ENCODE measurements at regions of chr5 and their contacts with region 1.

Region 1: DNA sequence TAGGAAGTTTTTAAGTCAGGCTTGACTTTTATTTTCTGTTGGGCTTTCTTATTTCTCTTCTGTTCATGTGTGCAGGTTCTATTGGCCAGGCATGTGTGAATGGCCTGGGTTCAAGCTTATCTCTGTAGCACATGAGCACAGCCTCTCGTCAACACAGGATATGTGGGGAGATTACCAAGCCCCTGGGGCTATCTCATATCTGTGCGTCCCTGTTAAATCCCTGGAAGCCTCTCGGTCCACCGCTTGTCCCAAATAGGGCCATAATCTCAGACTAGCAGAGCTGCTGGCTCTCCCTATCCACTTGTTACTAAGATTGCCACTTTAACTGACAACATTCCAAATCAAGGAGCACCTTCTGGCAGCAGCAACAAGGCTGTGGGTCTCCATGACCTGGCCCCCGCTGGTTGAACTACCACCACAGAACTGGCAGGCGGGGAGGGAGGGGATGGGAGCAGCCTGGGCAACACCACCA is 28.4 kb upstream of the EBF1 start:
- DNase-seq: no peak
- ATAC-seq: no peak
- H3K4me3 ChIP-seq: no peak overlapping the region
- H3K27ac ChIP-seq: no peak overlapping the region
- H3K4me1 ChIP-seq: peaks cover 0 to 5% (median 0%) of the 10 kb centered on the region in 12 donors
- H3K27me3 ChIP-seq: no peaks in the 10 kb centered on the region
- CTCF ChIP-seq: no peak
- POLR2A ChIP-seq: no peak

Region 2: GRCh38 chr5:158165638-158166037 is 962.5 kb before region 1 on chr5:
- intact Hi-C with region 1: loop called in 3 of 10 experiments (anchors 5 to 10 kb)
- DNase-seq: no peak
- ATAC-seq: no peak
- H3K4me3 ChIP-seq: no peak overlapping the region
- H3K27ac ChIP-seq: no peak overlapping the region
- H3K4me1 ChIP-seq: no peaks in the 10 kb centered on the region
- H3K27me3 ChIP-seq: peaks cover 0 to 9% (median 0%) of the 10 kb centered on the region in 9 donors
- CTCF ChIP-seq: no peak
- POLR2A ChIP-seq: no peak

Region 3: GRCh38 chr5:158967541-158967940 is 160.6 kb before region 1 on chr5:
- intact Hi-C with region 1: no loop called
- DNase-seq: no peak
- ATAC-seq: peak in 1 of 4 donors; percentile 80
- H3K4me3 ChIP-seq: no peak overlapping the region
- H3K27ac ChIP-seq: no peak overlapping the region
- H3K4me1 ChIP-seq: peaks cover 0 to 41% (median 8%) of the 10 kb centered on the region in 12 donors
- H3K27me3 ChIP-seq: no peaks in the 10 kb centered on the region
- CTCF ChIP-seq: no peak
- POLR2A ChIP-seq: no peak

Region 4: GRCh38 chr5:159061179-159061796 is 66.8 kb before region 1 on chr5:
- intact Hi-C with region 1: no loop called
- DNase-seq: peak; percentile 59 to 86 (median 65)
- ATAC-seq: peak in 3 of 4 donors; percentile 83 to 93 (median 92)
- H3K4me3 ChIP-seq: peak overlapping the region in 10 of 12 donors; percentile 6 to 54 (median 29)
- H3K27ac ChIP-seq: peak overlapping the region; percentile 44 to 83 (median 65)
- H3K4me1 ChIP-seq: peaks cover 0 to 60% (median 27%) of the 10 kb centered on the region in 12 donors
- H3K27me3 ChIP-seq: no peaks in the 10 kb centered on the region
- CTCF ChIP-seq: no peak
- POLR2A ChIP-seq: no peak